HCT116 (cell line): ENCODE measurements at regions of chr22 and their contacts with region 1.

Region 1: DNA sequence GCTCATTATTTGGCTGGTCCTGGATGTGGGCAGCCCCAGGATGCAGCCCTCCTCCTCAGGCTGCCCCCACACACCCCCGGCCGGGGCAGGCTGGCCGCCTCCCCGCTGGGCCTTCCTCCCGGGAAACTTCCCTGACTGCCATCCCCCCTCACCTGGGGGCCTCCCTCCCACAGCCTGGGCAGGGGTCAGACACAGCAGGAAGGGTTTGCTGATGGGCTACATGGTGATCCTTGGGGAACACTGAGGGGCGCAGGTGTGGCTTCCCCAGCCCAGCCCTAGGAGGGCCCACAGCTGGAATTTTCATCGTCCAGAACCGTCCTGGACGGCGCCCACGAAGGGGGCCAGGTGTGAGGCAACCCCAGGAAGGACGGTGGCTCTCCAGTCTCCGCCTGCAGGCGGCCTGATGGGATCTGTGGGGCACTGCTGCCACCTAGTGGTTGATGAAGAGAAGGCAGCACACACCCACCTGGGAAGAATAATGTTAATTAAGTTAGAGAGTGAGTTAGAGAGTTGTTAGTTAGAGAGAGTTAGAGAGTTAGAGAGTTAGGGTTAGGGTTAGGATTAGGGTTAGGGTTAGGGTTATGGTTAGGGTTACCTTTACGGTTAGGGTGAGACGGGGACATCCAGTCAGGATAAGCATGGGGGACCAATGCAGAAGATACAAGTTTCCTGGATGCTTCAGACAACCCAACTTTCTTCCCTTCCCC is 75.9 kb upstream of the PRR5 start:
- DNase-seq: peak; percentile 38
- ATAC-seq: peak; percentile 81
- H3K4me3 ChIP-seq: no peak overlapping the region
- H3K27ac ChIP-seq: no peak overlapping the region
- H3K4me1 ChIP-seq: peaks cover 0 to 4% of the 10 kb centered on the region in 2 experiments; a peak in 1 of 4 replicates
- H3K27me3 ChIP-seq: no peaks in the 10 kb centered on the region
- CTCF ChIP-seq: peak; percentile 88 to 98 (median 94)
- POLR2A ChIP-seq: no peak
- RAD21 ChIP-seq: peak; percentile 92

Region 2: DNA sequence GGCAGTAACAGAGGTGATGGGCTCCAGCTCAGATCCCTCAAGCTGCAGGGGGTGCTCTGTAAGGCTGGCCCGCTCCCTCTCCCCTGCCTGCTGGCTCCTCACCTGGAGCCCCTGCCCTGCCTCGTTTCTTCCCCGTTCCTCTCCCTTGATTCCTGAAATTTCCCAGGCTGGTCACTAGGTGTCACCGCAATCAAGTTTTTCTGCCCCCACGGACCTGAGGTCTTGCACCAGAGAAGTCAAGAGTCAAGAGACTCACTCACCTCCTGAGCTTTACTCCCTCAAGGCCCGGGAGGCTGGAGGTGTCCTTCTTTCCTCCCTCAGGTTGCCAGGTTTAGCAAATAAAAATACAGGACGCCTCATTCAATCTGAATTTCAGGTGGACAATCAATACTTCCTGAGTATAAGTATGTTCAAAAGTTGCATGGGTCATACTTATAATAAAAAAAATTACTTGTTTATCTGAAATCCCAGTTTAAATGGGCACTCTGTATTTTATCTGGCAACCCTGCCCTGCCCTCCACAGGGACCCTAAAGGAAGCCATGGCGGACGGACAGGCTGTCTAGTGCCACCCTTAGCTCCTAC is 1352.1 kb before region 1 on chr22:
- CTCF ChIA-PET with region 1: no interaction called
- POLR2A ChIA-PET with region 1: no interaction called
- RAD21 ChIA-PET with region 1: no interaction called
- intact Hi-C with region 1: loop called (anchors 10 kb)
- DNase-seq: peak; percentile 47
- ATAC-seq: peak; percentile 81
- H3K4me3 ChIP-seq: no peak overlapping the region
- H3K27ac ChIP-seq: no peak overlapping the region
- H3K4me1 ChIP-seq: peaks cover 18 to 39% of the 10 kb centered on the region in 2 experiments
- H3K27me3 ChIP-seq: no peaks in the 10 kb centered on the region
- CTCF ChIP-seq: peak; percentile 70 to 81 (median 76)
- POLR2A ChIP-seq: no peak
- RAD21 ChIP-seq: peak; percentile 88

Region 3: DNA sequence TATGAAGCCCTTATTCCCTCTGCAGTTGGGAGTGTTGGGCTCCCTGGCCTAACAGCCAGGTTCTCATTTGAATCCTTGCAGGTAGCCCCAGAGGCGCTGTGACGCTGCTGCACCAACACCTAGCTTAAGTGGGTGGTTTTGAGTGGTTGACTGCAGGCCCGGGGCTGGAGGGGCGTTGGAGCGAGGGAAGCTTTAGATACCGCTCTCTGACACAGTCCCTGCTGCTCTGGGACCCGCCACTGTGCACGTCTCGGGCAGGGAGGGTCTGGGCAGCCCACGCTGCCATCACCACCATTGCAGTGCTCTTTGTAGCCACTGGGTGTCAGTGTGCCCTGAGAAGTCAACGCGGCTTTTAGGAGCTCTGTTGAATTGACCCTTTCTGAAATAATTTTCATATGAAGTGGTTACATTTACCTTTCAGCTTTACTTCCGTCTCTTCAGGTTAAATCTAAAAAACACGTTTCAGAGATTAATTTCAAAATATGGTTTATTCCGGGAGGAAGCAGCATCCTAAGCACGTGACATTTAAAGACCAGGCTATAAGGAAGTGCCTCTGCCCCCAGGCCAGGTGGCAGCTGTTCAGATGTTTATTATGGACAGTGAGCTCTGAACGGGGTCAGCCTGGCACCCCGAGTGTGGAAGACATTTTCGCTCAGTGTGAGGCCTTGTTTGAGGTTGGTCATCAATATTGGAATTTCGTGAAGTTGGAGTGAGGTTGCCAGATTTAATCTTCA is 632.9 kb before region 1 on chr22:
- CTCF ChIA-PET with region 1: interaction called, 51 read pairs
- POLR2A ChIA-PET with region 1: no interaction called
- RAD21 ChIA-PET with region 1: interaction called, 4 to 8 read pairs
- intact Hi-C with region 1: loop called (anchors 1 kb)
- DNase-seq: peak; percentile 21
- ATAC-seq: peak; percentile 94
- H3K4me3 ChIP-seq: no peak overlapping the region
- H3K27ac ChIP-seq: 0 out of 2 replicates have a peak overlapping the region, but pooled peaks have one; percentile 29
- H3K4me1 ChIP-seq: no peaks in the 10 kb centered on the region
- H3K27me3 ChIP-seq: no peaks in the 10 kb centered on the region
- CTCF ChIP-seq: peak; percentile 68 to 99 (median 94)
- POLR2A ChIP-seq: no peak
- RAD21 ChIP-seq: peak; percentile 79

Region 4: DNA sequence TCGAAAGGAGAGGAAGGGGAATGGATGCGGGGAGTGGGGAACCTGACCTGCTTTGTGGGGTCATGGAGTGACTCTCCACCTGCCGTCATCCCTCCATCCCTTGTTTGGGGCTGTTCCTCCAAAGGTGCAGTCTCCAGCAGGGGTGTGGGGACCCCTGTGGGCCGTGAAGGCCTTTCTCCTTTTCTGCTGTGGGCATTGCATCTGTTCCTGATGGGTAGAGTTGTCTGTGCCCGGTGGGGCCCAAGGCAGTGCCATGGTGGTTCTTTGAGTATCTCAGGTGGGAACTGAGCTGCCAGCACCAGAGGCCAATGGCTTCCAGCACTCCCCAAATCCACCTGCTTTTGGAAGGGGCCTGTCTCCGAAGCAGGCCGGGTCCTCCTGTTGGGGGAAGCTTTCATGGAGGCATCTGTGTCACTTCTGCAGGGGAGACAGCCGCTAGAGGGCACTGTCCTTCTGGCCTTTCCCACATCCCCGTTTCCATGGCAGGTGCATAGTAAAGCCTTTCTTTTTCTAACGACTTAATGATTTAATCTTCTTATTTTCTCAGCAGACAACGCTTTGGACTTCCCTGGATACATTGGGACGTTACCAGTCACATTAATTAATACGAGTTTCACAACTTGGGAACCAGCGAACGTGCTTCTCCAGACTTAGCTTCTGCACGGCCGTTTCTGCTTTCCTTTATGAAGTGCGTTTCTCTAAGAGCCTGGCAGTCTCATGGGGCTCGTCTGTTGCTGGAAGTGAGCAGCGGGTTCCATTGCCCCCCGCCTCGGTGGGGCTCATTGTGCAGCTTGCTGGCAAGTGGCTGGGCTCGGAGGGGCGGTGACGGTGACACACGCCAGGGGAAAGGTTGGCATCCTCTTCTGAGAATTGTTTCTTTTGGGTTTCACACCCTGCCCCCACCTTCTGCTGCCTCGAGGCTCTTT is 544.9 kb before region 1 on chr22:
- CTCF ChIA-PET with region 1: interaction called, 11 read pairs
- POLR2A ChIA-PET with region 1: no interaction called
- RAD21 ChIA-PET with region 1: interaction called in 1 of 2 experiments, 4 read pairs
- intact Hi-C with region 1: loop called (anchors 2 kb)
- DNase-seq: peak; percentile 29
- ATAC-seq: peak; percentile 77
- H3K4me3 ChIP-seq: no peak overlapping the region
- H3K27ac ChIP-seq: no peak overlapping the region
- H3K4me1 ChIP-seq: no peaks in the 10 kb centered on the region; a peak in 1 of 4 replicates
- H3K27me3 ChIP-seq: no peaks in the 10 kb centered on the region
- CTCF ChIP-seq: peak; percentile 46 to 93 (median 91); a peak in 5 of 6 replicates
- POLR2A ChIP-seq: no peak
- RAD21 ChIP-seq: peak; percentile 66

Region 5: DNA sequence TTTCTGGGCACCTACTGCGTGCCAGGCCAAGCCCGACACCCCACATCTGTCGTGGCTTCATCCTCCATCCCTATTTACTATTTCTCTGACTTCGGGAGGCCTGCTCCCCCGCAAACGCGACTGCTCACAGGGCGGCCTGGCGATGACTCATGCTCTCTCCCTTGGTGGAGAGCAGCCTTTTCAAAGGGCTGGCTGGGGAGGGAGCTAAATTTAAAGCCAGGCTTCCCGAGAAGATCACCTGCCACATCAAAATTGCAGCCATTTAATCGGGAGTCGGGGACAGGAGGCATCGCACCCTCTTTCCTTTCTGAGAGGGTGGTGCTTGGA is 288.5 kb before region 1 on chr22:
- CTCF ChIA-PET with region 1: interaction called, 3 read pairs
- POLR2A ChIA-PET with region 1: no interaction called
- RAD21 ChIA-PET with region 1: interaction called in 1 of 2 experiments, 3 read pairs
- intact Hi-C with region 1: loop called (anchors 1 kb)
- DNase-seq: no peak
- ATAC-seq: peak; percentile 63
- H3K4me3 ChIP-seq: no peak overlapping the region
- H3K27ac ChIP-seq: no peak overlapping the region
- H3K4me1 ChIP-seq: peaks cover 4 to 19% of the 10 kb centered on the region in 2 experiments; a peak in 3 of 4 replicates
- H3K27me3 ChIP-seq: no peaks in the 10 kb centered on the region
- CTCF ChIP-seq: no peak
- POLR2A ChIP-seq: no peak
- RAD21 ChIP-seq: no peak